ENCODE measurements at regions of chr2 and their contacts with region 1.

Region 1: DNA sequence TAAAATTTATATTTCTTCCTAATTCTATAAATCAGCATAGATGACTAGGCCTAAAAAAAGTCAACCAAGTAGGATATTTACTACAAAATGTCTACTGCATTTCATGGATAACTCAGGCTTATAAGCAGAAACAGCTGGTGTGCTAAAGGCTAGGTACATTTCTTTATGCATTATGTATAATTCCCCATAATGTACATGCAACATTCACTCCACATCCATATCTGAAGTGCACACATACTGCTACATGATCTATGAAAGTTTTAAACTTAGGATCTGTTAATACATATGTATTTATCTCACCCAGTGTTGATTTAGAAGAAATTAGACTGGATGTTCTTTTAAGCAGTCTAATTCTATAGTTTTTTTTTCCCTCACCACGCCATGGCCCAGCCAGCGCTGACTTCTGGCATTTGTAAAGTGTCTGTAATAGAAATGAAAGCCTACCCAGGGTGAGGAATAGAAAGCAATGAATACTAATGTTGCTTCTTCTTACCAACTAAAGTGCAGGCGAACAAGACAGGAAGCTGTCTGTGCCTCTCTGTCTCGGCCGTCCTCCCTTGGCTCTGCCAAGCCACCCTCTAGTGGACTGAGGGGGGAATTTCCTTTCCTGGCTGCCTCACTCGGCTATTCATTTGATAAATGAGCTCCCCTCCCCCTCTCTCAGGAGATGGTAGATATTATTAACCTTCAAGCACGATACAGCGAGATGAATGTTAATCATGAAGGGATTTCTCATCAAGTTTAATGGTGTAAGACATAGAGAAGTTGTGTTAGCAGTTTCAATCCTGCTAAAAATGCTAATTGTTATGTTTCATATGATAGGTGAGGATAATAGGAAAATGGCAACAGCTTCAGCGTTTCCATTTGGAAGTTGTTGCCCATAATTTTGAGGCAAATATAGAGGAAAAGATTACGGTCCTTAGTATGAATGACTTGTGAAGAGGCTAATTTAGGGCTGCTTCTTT is 384.5 kb downstream of the MTX2 start:
- DNase-seq: no peak
- H3K4me3 ChIP-seq: no peak overlapping the region
- H3K27ac ChIP-seq: no peak overlapping the region
- H3K4me1 ChIP-seq: no peaks in the 10 kb centered on the region
- H3K27me3 ChIP-seq: peaks cover 0 to 4% of the 10 kb centered on the region in 2 donors
- CTCF ChIP-seq: peak; percentile 41 to 61 (median 48)
- POLR2A ChIP-seq: no peak

Region 2: DNA sequence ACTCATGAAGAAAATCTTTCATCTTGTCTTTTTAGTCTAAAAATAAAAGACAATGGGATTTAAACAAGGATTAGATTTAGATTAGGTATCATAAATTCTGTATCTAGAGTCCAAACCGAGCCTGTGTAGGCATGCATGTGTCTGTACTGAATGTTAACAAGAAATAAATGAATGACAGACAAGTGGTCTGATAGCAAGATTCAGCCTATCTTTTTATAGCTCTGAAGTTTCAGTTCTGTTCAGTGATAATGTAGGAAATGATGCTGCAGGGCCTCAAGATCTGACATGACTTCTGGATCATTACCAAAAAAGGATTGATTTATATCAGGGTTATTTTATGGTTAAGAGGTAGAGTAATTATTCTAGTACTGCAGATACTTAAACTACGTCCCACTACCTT is 1335.2 kb before region 1 on chr2:
- intact Hi-C with region 1: loop called (anchors 5 kb)
- DNase-seq: no peak
- H3K4me3 ChIP-seq: no peak overlapping the region
- H3K27ac ChIP-seq: no peak overlapping the region
- H3K4me1 ChIP-seq: no peaks in the 10 kb centered on the region
- H3K27me3 ChIP-seq: no peaks in the 10 kb centered on the region
- CTCF ChIP-seq: no peak
- POLR2A ChIP-seq: no peak

Region 3: DNA sequence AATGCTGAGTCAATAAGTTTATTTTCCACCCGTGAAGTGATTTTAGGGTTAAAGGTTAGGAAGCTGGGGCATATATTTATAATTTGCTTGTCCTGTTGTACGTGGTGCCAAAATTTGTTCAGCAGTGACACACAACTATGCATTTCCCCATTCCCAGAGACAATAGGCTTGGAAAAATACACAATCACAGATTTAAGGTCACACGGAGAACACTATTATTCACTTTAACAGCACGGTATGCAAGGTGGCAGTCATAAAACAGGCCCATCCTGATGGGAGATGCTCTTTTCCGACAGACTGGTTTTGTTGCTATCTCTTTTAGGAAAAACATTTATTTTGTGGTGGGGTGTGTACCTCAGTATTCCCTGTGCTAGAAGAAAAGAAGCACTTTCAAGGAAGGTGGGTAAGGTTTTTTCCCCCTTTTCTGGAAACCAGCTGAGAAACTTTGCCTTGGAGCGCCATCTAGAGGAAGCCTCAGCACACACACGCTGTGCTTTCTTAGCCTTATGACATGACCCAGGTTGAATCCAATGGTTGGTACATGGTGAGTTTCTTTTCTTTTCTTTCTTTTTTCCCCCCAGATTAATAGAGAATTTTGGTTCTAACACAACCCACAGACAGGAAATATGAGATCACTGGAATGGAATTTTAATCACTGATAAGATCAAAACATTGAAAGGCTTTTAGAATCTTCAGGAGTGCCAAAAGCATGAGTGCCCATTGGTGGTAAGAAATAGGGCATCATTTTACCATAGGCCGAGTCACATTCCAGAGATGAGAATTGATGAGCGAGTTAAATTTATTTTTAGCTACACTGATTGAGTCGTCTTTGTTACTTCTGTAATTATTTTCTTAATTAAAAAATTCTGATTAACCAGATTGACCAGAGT is 1070.9 kb after region 1 on chr2:
- intact Hi-C with region 1: no loop called
- DNase-seq: no peak
- H3K4me3 ChIP-seq: no peak overlapping the region
- H3K27ac ChIP-seq: no peak overlapping the region
- H3K4me1 ChIP-seq: no peaks in the 10 kb centered on the region
- H3K27me3 ChIP-seq: no peaks in the 10 kb centered on the region
- CTCF ChIP-seq: peak; percentile 63 to 73 (median 70)
- POLR2A ChIP-seq: no peak